ENCODE measurements at regions of chr17 and their contacts with region 1.

Region 1: GRCh38 chr17:1673041-1673785 is 11.5 kb downstream of the PRPF8 start:
- DNase-seq: peak in 4 of 9 experiments; percentile 15 to 43 (median 38)
- ATAC-seq: peak; percentile 42
- H3K4me3 ChIP-seq: no peak overlapping the region
- H3K4me3 Mint-ChIP-seq: no peak overlapping the region
- H3K27ac ChIP-seq: no peak overlapping the region
- H3K27ac Mint-ChIP-seq: no peak overlapping the region
- H3K4me1 ChIP-seq: no peaks in the 10 kb centered on the region
- H3K4me1 Mint-ChIP-seq: peaks cover 29% of the 10 kb centered on the region
- H3K27me3 ChIP-seq: no peaks in the 10 kb centered on the region
- H3K27me3 Mint-ChIP-seq: no peaks in the 10 kb centered on the region
- CTCF ChIP-seq: no peak

Region 2: GRCh38 chr17:1661045-1661444 is 12.2 kb before region 1 on chr17:
- CTCF ChIA-PET with region 1: interaction called, 11 read pairs
- POLR2A ChIA-PET with region 1: no interaction called
- intact Hi-C with region 1: no loop called
- DNase-seq: no peak
- ATAC-seq: no peak
- H3K4me3 ChIP-seq: no peak overlapping the region
- H3K4me3 Mint-ChIP-seq: no peak overlapping the region
- H3K27ac ChIP-seq: no peak overlapping the region
- H3K27ac Mint-ChIP-seq: no peak overlapping the region
- H3K4me1 ChIP-seq: no peaks in the 10 kb centered on the region
- H3K4me1 Mint-ChIP-seq: peaks cover 6% of the 10 kb centered on the region
- H3K27me3 ChIP-seq: no peaks in the 10 kb centered on the region
- H3K27me3 Mint-ChIP-seq: no peaks in the 10 kb centered on the region
- CTCF ChIP-seq: no peak

Region 3: GRCh38 chr17:1865252-1866037 is 192.2 kb after region 1 on chr17:
- CTCF ChIA-PET with region 1: interaction called, 12 read pairs
- POLR2A ChIA-PET with region 1: no interaction called
- intact Hi-C with region 1: loop called (anchors 1 kb)
- DNase-seq: peak; percentile 16 to 74 (median 53)
- ATAC-seq: peak; percentile 70
- H3K4me3 ChIP-seq: no peak overlapping the region
- H3K4me3 Mint-ChIP-seq: no peak overlapping the region
- H3K27ac ChIP-seq: no peak overlapping the region
- H3K27ac Mint-ChIP-seq: no peak overlapping the region
- H3K4me1 ChIP-seq: peaks cover 12% of the 10 kb centered on the region
- H3K4me1 Mint-ChIP-seq: peaks cover 11% of the 10 kb centered on the region
- H3K27me3 ChIP-seq: no peaks in the 10 kb centered on the region
- H3K27me3 Mint-ChIP-seq: no peaks in the 10 kb centered on the region
- CTCF ChIP-seq: peak; percentile 82